Mammary epithelial cell (primary cell): ENCODE measurements at regions of chr17 and their contacts with region 1.

Region 1: DNA sequence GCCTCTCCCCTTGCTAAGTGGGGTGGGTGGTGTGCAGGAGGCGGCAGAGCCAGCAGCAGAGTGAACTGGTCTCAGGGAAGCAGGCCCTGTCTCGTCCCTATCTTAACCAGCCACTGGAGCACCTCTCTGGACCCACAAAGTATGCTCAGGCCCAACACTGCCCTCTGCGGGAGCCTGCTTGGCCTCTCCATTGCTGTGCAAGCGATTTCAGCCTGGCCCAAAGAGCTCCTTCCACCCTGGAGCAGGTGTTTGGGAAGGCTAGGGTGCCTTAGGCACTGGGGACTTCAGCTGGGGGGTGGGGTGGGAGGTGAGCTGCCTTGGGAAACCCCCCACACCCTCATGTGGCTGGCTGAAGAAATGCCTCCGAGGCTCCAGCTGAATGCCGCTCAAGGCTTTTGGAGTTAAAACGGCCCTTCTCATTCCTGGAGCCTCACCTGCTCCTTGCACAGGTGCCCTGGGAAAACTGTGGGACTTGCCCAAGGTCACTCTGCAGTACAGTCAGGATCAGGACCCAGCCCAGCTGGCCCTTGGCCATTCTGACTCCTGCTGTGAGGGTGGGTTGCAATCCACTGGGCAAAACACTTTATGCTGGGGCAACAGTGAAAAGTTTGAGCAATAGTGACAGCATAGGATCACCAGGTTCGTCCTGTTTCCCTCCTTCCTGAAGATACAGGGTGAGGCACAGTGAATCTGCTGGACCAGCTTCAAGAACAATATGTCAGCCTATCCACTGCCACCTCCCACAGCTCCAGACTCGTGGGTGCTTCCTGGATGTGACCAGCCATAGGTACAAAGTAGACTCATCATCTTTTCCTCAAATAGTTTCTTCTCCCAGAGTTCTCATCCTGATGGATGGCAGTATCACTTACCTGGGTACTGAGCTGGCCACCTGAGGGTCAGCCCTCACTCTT is 5.9 kb upstream of the UBE2O start:
- DNase-seq: peak; percentile 56
- H3K4me3 ChIP-seq: no peak overlapping the region
- H3K27ac ChIP-seq: no peak overlapping the region
- H3K4me1 ChIP-seq: no peaks in the 10 kb centered on the region
- H3K27me3 ChIP-seq: no peaks in the 10 kb centered on the region
- CTCF ChIP-seq: peak; percentile 71 to 88

Region 2: DNA sequence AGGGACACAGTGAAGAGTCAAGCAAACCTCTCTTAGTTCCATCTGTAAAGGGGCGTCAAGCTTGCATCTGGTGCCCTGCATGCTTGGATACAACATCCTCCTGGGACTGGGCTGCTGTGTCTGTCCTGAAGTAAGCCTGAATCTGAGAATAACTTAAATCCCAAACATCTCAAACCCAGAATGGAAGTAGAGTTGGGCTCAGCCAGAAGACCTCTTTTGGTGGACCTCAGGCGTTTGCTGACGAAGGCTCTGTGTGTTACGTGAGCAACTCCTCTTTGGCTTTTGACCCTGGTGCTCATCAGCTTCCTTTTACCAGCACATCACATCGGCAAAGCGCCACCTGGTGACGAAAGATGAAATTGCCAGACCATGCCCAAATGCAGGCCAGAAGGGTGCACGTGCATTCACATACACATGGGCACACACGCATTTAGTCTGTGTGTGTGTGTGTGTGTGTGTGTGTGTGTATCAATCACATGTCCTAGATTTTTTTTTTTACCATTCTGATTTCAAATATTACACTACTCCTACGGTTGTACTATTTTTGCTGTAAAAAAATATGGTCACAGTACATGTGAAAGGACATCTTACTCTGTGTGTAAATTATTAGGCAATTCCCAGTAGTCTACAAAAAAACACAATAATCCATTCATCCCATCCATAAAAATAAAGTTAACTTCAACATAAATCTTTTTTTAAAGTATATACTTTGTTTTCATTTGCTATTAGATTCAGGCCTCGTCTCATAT is 276.6 kb before region 1 on chr17:
- CTCF ChIA-PET with region 1: no interaction called
- dilution Hi-C with region 1: no loop called
- in situ Hi-C with region 1: no loop called
- intact Hi-C with region 1: no loop called
- DNase-seq: peak; percentile 82
- H3K4me3 ChIP-seq: no peak overlapping the region
- H3K27ac ChIP-seq: no peak overlapping the region
- H3K4me1 ChIP-seq: no peaks in the 10 kb centered on the region
- H3K27me3 ChIP-seq: no peaks in the 10 kb centered on the region
- CTCF ChIP-seq: peak; percentile 91 to 97

Region 3: GRCh38 chr17:76296186-76296585 is 162.6 kb before region 1 on chr17:
- CTCF ChIA-PET with region 1: no interaction called
- dilution Hi-C with region 1: no loop called
- in situ Hi-C with region 1: no loop called
- intact Hi-C with region 1: no loop called
- DNase-seq: no peak
- H3K4me3 ChIP-seq: no peak overlapping the region
- H3K27ac ChIP-seq: no peak overlapping the region
- H3K4me1 ChIP-seq: no peaks in the 10 kb centered on the region
- H3K27me3 ChIP-seq: no peaks in the 10 kb centered on the region
- CTCF ChIP-seq: no peak

Region 4: DNA sequence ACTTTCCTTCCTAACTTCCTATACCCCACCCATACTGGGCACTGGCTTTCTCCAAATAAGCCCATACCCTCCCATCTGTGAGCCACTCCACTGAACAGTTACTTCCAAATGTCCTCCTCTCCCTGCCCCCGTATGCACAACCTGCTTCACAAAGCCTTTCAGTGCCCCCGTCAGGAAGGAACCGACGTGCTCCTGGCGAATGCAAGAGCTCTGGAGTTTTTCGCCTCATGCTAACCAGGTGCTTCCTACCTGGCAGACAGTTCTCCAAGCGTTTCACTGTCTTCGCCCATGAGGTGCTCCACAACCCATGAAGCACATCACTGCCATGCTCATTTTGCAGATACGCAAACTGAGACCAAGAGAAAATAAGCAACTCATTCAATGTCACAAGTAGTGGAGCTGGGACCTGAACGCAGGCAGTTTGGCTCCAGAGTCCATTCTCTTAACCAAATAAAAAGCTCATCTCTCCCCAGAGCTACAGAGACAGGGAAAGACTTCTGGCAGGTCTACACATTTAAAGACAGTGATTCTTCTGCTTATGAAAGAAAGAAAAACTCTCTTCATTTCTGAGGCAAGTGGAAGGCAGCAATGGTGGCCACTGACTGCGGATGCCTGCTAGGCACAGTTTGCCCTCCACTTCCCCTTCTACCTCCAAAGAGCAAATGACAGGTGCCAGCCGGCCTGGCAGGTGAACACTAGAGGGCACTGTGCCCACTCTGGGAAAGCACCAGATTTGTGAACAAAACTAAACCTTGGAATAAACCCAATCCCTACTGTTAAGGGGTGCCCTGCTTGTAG is 50.6 kb before region 1 on chr17:
- CTCF ChIA-PET with region 1: interaction called, 8 read pairs
- dilution Hi-C with region 1: no loop called
- in situ Hi-C with region 1: no loop called
- intact Hi-C with region 1: loop called (anchors 1 kb)
- DNase-seq: peak; percentile 52
- H3K4me3 ChIP-seq: no peak overlapping the region
- H3K27ac ChIP-seq: no peak overlapping the region
- H3K4me1 ChIP-seq: no peaks in the 10 kb centered on the region
- H3K27me3 ChIP-seq: no peaks in the 10 kb centered on the region
- CTCF ChIP-seq: peak; percentile 96 to 98

Region 5: DNA sequence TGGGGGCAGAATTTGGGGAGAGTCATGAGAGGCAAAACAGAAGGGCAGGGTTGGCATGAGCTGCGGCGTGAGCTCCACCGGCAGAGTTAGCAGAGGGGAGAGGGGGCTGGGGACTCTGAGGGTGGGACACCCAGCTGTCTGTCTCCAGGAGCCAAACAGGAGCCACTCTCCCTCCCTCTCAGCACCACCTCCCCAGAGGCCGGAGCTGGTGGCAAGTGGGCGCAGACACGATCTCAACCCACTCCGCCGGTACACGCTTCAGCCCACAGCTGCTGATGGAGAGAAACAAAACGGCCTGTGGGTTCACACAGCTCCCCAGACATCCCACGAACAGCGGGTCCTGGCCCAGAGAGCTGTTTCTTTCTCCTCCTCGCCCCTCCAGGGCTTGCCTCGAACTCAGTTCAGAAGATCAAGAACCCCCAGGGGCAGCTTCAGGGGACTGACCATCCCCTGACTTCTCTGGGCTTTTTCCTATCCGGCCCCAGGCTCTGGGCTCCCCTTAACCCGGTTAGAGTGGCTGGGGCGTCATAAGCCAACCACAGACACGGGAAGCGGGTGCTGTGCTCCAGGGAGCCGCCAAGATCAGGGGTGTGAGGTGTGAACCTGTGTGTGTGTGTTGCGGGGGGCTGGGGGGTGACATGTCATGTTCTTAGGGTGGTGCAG is 34.8 kb after region 1 on chr17:
- CTCF ChIA-PET with region 1: no interaction called
- dilution Hi-C with region 1: no loop called
- in situ Hi-C with region 1: no loop called
- intact Hi-C with region 1: no loop called
- DNase-seq: no peak
- H3K4me3 ChIP-seq: no peak overlapping the region
- H3K27ac ChIP-seq: no peak overlapping the region
- H3K4me1 ChIP-seq: peaks cover 27% of the 10 kb centered on the region
- H3K27me3 ChIP-seq: no peaks in the 10 kb centered on the region
- CTCF ChIP-seq: no peak

Region 6: DNA sequence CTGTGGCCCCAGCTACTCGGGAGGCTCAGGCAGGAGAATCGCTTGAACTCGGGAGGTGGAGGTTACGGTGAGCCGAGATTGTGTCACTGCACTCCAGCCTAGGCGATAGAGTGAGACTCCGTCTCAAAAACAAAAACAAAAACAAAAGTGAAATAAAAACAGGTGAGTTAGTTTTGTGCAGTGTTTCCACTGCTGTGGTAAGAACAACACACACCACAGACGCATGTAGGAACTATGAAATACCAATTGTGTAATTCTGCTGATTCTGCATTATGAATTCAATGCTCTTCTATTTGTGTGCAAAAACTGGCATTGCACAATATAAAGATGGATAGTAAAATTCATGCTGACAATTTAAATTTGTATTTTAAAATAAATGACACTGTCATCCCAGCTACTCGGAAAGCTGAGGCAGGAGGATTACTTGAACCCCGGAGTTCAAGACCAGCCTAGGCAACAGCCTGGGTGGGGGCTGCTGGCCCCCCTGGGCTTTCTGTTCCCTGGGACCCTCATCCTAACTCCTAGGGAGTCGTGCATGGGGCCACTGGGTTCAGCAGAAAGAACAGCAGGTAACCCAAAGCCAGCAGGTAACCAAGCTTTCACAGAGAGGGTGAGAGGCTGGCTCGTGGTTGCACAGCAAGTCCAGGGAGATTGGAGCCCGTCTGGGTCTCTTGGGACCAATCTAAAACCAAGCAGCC is 53.0 kb after region 1 on chr17:
- CTCF ChIA-PET with region 1: no interaction called
- dilution Hi-C with region 1: loop called (anchors 5 kb)
- in situ Hi-C with region 1: no loop called
- intact Hi-C with region 1: no loop called
- DNase-seq: no peak
- H3K4me3 ChIP-seq: no peak overlapping the region
- H3K27ac ChIP-seq: no peak overlapping the region
- H3K4me1 ChIP-seq: peaks cover 9% of the 10 kb centered on the region
- H3K27me3 ChIP-seq: no peaks in the 10 kb centered on the region
- CTCF ChIP-seq: no peak

Region 7: GRCh38 chr17:76578344-76578979 is 119.6 kb after region 1 on chr17:
- CTCF ChIA-PET with region 1: no interaction called
- dilution Hi-C with region 1: loop called (anchors 5 kb)
- in situ Hi-C with region 1: no loop called
- intact Hi-C with region 1: no loop called
- DNase-seq: peak; percentile 84
- H3K4me3 ChIP-seq: no peak overlapping the region
- H3K27ac ChIP-seq: peak overlapping the region; percentile 52
- H3K4me1 ChIP-seq: peaks cover 54% of the 10 kb centered on the region
- H3K27me3 ChIP-seq: no peaks in the 10 kb centered on the region
- CTCF ChIP-seq: no peak

Region 8: GRCh38 chr17:76714822-76715495 is 256.1 kb after region 1 on chr17:
- CTCF ChIA-PET with region 1: no interaction called
- dilution Hi-C with region 1: no loop called
- in situ Hi-C with region 1: no loop called
- intact Hi-C with region 1: loop called (anchors 5 kb)
- DNase-seq: no peak
- H3K4me3 ChIP-seq: no peak overlapping the region
- H3K27ac ChIP-seq: no peak overlapping the region
- H3K4me1 ChIP-seq: peaks cover 10% of the 10 kb centered on the region
- H3K27me3 ChIP-seq: no peaks in the 10 kb centered on the region
- CTCF ChIP-seq: peak; percentile 79 to 84

Region 9: GRCh38 chr17:76726231-76726775 is 267.5 kb after region 1 on chr17 and contains the start of gene JMJD6:
- CTCF ChIA-PET with region 1: no interaction called
- dilution Hi-C with region 1: no loop called
- in situ Hi-C with region 1: no loop called
- intact Hi-C with region 1: no loop called
- DNase-seq: peak; percentile 97
- H3K4me3 ChIP-seq: peak within 1 kb of the TSS; percentile 86 to 97 (median 96)
- H3K27ac ChIP-seq: peak within 1 kb of the TSS; percentile 84
- H3K4me1 ChIP-seq: peaks cover 8% of the 10 kb centered on the region
- H3K27me3 ChIP-seq: no peaks in the 10 kb centered on the region
- CTCF ChIP-seq: no peak
- total RNA-seq, gene JMJD6: 10.3 to 22.2 TPM